ENCODE measurements at regions of chr3 and their contacts with region 1.

Region 1: GRCh38 chr3:10683106-10683505 is 132.9 kb upstream of the SLC6A11 start:
- DNase-seq: no peak
- ATAC-seq: no peak
- H3K4me3 ChIP-seq: no peak overlapping the region
- H3K27ac ChIP-seq: no peak overlapping the region
- H3K4me1 ChIP-seq: no peaks in the 10 kb centered on the region
- H3K27me3 ChIP-seq: peaks cover 0 to 30% (median 0%) of the 10 kb centered on the region in 7 donors
- CTCF ChIP-seq: no peak

Region 2: DNA sequence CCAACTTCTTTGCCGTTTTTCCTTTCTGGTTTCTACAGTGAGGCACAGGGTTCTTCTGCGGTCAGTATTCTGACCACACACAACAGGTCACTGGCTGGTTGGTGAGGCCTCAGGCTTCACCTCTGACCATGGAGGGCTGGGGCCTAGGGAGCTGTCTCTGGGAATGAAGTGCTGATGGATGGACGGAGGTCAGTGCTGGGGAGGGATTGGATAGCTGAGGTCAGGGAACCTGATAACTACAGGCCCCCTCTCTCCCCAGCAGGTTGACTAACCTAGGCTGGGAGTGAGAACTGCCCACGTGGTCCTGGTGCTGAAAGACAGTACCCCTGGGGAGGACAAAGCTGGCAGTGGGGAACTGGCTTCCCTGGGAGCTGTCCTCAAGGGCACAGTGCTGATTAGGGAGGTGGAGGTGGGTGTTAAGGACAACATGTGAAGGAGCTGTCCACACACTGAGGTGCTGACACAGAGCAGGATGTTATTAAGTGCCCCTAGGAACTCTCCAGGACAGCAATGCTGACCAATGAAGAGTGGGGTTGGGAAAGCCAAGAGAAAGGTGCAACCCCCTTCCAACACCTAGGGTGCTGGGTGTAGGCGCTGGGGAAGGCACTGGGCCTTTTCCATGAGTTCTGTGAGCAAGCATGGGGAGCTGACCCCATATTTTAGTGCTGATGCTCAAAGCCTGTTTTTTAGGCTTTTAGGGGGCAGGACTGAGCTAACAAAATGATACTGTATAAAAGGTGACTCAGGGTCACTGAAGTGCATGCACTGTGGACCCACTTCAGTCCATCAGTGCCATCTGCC is 223.0 kb before region 1 on chr3:
- intact Hi-C with region 1: loop called in 1 of 10 experiments (anchors 10 kb)
- DNase-seq: peak in 1 of 2 donors; percentile 66
- ATAC-seq: peak; percentile 38 to 87 (median 82)
- H3K4me3 ChIP-seq: no peak overlapping the region
- H3K27ac ChIP-seq: no peak overlapping the region
- H3K4me1 ChIP-seq: no peaks in the 10 kb centered on the region
- H3K27me3 ChIP-seq: peaks cover 0 to 19% (median 0%) of the 10 kb centered on the region in 7 donors
- CTCF ChIP-seq: no peak

Region 3: DNA sequence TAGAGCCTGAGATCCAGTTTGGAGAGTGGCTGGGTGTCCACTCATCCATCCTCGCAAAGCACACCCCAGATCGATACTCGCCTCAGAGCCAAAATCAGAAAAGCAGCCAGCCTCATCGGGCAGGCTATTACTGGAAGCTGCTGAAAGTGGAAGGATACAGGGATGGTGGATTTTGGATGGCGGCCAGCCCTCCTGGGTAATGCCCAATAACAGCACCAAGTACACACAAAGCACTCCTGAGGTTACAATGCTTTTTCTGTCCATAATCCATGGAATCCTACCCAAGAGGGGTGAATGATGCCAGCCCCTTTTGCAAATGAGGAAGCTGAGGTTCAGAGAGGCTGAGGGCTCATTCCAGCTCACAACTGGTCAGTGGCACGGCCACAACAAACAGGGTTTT is 39.8 kb after region 1 on chr3:
- intact Hi-C with region 1: no loop called
- DNase-seq: no peak
- ATAC-seq: no peak
- H3K4me3 ChIP-seq: no peak overlapping the region
- H3K27ac ChIP-seq: no peak overlapping the region
- H3K4me1 ChIP-seq: no peaks in the 10 kb centered on the region
- H3K27me3 ChIP-seq: peaks cover 0 to 40% (median 10%) of the 10 kb centered on the region in 7 donors
- CTCF ChIP-seq: no peak

Region 4: DNA sequence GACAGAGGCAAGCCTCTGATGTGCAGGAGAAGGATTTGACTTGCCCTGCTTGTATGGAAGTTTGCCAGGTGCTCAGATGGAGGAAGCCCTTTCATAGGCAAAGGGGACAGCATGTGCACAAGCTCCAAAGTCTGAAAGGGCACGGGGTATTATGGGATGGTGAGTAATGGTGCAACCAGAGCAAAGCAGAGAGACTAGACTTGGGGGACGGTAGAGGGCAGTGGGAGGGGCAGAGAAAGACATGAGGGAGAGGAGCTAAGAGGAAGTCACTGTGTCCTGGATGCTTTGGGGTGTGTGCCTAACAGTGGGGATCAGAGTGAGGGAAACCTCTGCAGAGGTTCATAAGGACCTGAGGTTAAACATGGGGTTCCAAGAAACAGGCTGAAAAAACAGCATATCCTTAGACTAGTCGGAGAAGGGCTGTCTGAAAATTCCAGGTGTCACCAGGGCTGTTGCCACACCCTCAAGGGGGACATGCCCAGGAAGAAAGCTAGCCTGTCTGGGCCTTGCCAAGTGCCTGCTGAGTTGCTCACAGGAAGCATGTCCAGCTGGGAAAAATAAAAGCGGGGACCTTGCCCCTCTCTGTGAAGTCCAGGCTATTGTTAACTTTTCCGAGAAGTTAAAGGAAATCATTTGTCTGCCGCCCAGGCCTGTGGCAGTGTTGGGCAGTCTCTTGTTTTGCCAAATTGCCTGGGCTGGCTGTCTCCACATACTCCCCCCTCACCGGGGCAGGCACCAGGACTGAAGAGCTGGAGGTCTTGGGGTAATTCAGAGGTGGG is 518.3 kb after region 1 on chr3:
- intact Hi-C with region 1: no loop called
- DNase-seq: peak in 1 of 2 donors; percentile 14
- ATAC-seq: peak; percentile 50 to 75 (median 69)
- H3K4me3 ChIP-seq: no peak overlapping the region
- H3K27ac ChIP-seq: peak overlapping the region in 5 of 10 donors; percentile 2 to 74 (median 56)
- H3K4me1 ChIP-seq: peaks cover 0 to 41% (median 12%) of the 10 kb centered on the region in 9 donors
- H3K27me3 ChIP-seq: peaks cover 0 to 6% (median 0%) of the 10 kb centered on the region in 7 donors
- CTCF ChIP-seq: no peak

Measured in heart right ventricle (tissue), 16 donors.